Right ventricle myocardium inferior (tissue), 1 donor: ENCODE measurements at regions of chr13 and their contacts with region 1.

Region 1: DNA sequence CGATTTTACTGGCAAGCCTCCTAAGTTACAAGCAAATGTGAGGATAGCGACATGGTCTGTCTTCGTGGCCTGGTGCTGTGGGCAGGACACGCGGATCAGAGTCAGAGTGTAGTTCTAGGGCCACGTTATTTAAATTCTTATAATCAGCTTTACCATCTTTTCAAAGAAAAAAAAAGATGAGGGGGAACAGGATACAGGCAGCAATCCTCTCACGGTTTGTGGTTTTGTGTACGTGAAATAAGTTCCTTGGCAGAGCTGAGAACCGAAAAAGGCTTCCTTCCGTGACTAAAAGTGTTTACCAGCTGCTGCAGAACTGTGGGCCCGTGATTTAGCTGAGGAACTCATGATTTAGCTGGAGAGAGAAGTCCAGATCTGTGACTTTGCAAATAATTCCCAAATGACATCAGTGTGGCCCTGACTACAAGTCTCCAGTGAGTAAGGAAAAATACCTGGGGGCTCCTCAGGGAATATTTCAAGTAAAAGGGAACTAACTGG is 27.2 kb downstream of the RCBTB2 start:
- DNase-seq: no peak
- ATAC-seq: peak; percentile 61

Region 2: GRCh38 chr13:48405875-48406274 is 99.8 kb before region 1 on chr13:
- intact Hi-C with region 1: loop called (anchors 5 kb)
- DNase-seq: no peak
- ATAC-seq: no peak